ENCODE measurements at regions of chr22 and their contacts with region 1.

Region 1: GRCh38 chr22:20885557-20886323 is 26.9 kb downstream of the SNAP29 start:
- DNase-seq: peak; percentile 81 to 88 (median 86)
- H3K4me3 ChIP-seq: peak overlapping the region in 4 of 7 experiments; percentile 19 to 69 (median 62)
- H3K27ac ChIP-seq: peak overlapping the region in 1 of 2 experiments; percentile 73
- H3K4me1 ChIP-seq: peaks cover 0 to 12% (median 10%) of the 10 kb centered on the region in 4 experiments
- H3K27me3 ChIP-seq: no peaks in the 10 kb centered on the region

Region 2: DNA sequence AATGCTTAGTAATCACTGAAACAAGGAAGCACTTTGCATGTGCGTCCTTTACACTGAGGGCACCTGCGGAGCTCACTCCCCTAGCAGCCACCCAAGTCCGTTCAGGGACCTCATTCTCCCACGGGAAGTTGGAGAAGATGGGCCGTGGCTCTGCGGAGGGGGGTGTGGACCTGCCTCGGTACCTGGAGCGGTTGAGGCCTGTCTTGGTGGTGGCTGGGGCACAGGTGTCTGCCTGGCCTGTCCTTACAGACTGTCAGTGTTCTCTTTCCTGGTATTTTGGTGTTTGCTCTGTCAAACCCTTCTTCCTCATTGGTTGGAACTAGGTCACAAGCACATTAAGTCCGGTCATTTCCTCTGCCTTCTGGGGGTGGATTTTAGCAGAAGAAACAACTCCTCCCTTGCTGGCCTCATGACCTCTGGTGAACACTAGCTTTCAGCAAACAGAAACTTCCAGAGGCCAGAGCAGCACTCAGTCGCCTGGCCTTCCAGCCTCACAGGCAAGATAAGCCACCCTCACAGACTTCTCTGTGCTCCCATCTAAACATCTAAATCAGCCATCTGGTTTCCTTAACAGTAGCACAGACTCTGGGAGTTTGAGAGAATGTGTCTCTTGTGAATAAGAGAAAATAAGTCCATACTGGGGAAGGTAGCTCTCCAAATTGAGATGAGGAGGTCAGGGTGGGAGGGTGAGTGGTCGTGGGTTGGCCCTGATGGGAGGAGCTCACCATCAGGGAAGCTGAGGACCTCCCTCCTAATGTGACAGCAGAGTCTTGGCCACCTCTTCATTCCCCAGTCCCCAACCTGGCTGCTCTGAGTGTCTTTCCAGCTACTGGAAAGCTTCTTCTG is 18.3 kb before region 1 on chr22:
- CTCF ChIA-PET with region 1: interaction called, 17 read pairs
- POLR2A ChIA-PET with region 1: no interaction called
- DNase-seq: peak; percentile 25 to 73 (median 49)
- H3K4me3 ChIP-seq: peak overlapping the region in 1 of 7 experiments; percentile 50
- H3K27ac ChIP-seq: peak overlapping the region in 1 of 2 experiments; percentile 85
- H3K4me1 ChIP-seq: peaks cover 0 to 38% (median 21%) of the 10 kb centered on the region in 4 experiments
- H3K27me3 ChIP-seq: no peaks in the 10 kb centered on the region

Region 3: GRCh38 chr22:20899827-20900423 is 14.2 kb after region 1 on chr22:
- CTCF ChIA-PET with region 1: interaction called, 10 read pairs
- POLR2A ChIA-PET with region 1: no interaction called
- DNase-seq: no peak
- H3K4me3 ChIP-seq: no peak overlapping the region
- H3K27ac ChIP-seq: no peak overlapping the region
- H3K4me1 ChIP-seq: peaks cover 0 to 8% (median 0%) of the 10 kb centered on the region in 4 experiments
- H3K27me3 ChIP-seq: no peaks in the 10 kb centered on the region

Region 4: DNA sequence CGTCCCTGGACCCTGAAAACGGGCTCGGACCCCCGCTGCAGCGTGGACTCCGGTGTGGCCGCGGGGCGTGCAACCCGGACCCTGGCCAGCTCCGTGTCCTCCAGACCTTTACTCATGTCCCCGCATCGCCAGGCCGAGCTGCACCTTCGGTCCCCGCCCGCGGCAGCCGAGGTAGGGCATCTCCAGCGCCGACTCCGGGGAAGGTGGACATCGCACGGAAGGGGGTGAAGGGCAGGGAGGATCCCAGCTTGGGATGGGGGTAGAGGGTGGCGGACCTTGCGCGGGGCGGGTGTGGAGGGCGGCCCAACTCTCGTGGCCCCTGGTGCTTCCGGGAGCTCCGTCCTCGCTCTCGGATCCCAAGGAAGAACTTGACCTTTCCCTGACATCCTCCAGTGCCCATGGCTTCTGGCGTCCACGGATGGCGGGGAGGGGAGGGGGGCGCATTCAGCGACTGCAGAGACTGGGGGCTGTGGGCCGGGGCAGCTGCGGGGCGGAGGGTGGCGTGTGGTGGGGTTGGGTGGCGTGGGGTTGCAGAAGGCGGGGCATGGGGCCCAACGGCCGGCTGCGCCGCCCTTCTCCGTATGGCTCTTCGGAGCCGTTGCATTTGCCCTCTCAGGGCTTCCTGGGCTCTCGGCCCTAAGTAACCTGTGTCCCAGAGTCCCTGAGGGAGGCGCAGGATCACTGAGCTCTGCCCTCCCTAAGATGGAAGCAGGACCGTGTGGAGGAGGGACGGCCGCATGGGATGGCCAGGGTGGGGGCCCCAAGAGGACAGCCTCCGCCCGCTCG is 71.8 kb after region 1 on chr22:
- CTCF ChIA-PET with region 1: interaction called, 11 read pairs
- POLR2A ChIA-PET with region 1: interaction called, 3 read pairs
- DNase-seq: peak; percentile 31 to 56 (median 48)
- H3K4me3 ChIP-seq: peak overlapping the region; percentile 62 to 92 (median 76)
- H3K27ac ChIP-seq: no peak overlapping the region
- H3K4me1 ChIP-seq: peaks cover 0 to 21% (median 17%) of the 10 kb centered on the region in 4 experiments
- H3K27me3 ChIP-seq: no peaks in the 10 kb centered on the region

Measured in common myeloid progenitor, CD34-positive (primary cell).